HAP-1 (cell line): ENCODE measurements at regions of chr9 and their contacts with region 1.

Region 1: DNA sequence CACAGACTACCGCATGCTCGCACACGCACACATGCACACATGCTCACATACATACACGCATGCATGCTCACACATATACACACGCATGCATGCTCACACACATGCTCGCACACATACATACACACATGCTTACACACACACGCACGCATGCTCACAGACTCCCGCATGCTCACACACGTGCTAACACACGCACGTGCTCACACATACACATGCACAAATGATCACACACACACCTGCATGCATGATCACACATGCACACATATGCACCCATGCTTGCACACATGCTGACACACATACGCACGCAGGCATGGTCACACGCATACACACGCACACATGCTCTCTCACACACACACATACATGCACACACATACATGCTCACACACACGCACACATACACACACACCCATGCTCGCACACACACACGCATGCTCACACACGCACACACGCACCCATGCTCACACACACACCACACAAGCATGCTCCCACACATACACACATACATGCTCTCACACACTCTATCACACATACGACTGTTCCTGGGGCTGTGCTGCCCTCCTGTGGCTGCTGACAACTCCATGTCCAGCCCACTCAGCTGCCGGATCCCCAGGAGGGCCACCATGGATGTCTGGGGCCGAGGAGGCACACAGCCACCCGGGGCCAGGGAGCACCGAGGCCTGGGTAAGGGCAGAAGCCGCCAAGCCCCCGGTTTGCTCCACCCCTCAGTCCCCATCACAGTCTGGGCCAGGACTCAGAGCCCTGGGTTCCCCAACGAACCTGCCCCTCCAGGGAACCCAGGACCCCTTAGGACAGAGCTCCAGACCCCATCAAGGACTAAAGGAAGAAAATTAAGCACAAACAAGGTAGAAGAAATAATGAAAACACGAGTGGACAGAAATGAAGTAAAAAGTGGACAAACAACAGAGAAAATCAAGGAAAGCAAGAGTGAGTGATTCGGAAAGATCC is 31.4 kb upstream of the EGFL7 start:
- DNase-seq: peak; percentile 59 to 89
- H3K4me3 ChIP-seq: no peak overlapping the region
- H3K4me1 ChIP-seq: no peaks in the 10 kb centered on the region
- H3K27me3 ChIP-seq: no peaks in the 10 kb centered on the region

Region 2: GRCh38 chr9:136493567-136493971 is 137.8 kb before region 1 on chr9:
- in situ Hi-C with region 1: loop called (anchors 5 kb)
- DNase-seq: no peak
- H3K4me3 ChIP-seq: no peak overlapping the region
- H3K4me1 ChIP-seq: no peaks in the 10 kb centered on the region
- H3K27me3 ChIP-seq: no peaks in the 10 kb centered on the region

Region 3: GRCh38 chr9:136587145-136587943 is 44.0 kb before region 1 on chr9:
- in situ Hi-C with region 1: no loop called
- DNase-seq: peak in 1 of 2 experiments; percentile 68
- H3K4me3 ChIP-seq: no peak overlapping the region
- H3K4me1 ChIP-seq: peaks cover 4% of the 10 kb centered on the region; the same call in 1 of the 2 replicates
- H3K27me3 ChIP-seq: 0 out of 2 replicates have a peak, but pooled peaks cover under 1% of the 10 kb centered on the region